ENCODE measurements at regions of chr20 and their contacts with region 1.

Region 1: DNA sequence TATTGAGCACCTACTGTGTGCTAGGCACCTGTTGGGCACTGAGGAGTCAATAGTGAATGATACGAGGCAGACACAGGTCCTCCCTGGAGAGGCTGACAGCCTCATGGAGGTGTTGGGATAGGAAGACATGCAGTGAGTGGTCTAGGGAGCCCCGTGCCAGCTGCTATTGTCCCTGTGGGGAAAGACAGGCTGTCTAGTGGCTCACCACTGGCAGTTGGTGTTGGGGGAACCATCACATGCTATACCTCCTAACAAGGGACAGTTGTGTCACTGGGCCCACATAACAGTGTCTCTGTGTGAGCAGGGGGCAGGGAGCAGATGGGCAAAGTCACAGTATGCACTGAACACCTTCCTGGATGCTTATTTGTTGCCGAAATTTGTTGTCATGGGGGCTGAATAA is 45.9 kb upstream of the CTNNBL1 start:
- DNase-seq: no peak
- ATAC-seq: no peak

Region 2: DNA sequence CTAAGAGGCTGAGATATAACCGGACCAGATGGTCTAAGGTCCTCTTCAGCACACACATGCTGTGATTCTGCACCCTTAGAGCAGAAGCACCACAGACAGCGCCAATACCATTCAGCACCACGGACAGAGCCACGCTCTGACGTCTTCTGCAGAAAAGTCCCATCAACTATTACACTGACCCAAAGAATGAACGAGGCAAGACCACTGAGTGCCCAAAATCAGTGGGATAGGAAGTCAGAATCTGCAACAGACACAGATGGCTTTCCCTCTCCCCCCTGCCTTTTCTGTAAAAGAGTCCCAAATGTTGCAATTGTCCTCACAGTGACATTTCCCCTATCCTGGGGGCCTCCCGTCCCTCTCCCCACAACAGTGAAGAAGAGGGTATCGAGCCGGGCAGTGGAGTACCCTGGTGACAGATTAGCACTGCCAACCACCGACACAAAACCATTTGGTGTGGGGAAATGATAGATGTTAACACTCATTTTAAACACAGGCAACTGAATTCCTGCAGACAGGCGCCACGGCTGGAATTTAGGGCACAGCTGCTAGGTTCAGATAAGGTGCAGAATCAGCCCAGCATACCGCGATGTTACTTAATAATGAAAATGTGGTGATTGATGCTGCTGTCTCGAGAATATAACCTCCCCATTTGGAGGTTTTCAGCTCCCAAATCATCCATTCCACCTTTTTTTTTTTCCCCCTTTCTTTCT is 20.7 kb before region 1 on chr20:
- intact Hi-C with region 1: loop called (anchors 1 kb)
- DNase-seq: no peak
- ATAC-seq: peak; percentile 49

Region 3: DNA sequence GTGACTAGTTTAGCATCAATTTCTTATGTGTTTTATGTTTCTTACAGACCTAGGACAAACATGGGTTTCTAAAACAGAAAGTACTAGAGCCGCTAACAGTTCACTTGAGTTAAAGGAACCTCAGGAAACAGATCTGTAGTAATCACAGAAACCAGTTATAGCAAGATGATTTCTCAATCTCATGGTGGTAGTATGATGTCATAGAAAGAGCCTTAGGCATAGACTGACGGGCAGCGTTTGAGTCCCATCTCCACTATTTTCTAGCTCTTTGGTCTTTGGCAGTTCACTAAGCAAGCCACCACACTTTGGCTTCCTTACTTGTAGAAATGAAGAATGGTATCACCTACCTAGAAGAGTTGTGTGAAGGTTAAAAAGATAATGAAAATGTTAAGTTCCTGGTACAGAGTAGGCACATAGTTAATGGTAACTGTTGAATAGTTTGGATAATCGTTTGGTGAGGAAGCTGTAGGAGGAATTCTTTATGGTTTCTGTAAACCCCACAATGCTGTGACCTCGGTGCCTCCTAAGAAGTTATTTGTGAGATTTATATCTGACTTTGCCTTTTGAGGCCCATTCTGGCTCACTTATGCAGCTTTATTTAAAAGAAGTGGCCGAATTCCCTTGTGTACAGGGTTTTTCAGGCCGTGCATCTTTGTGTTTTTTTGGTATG is 67.2 kb after region 1 on chr20:
- intact Hi-C with region 1: no loop called
- DNase-seq: no peak
- ATAC-seq: no peak